Naive thymus-derived CD4-positive, alpha-beta T cell (primary cell): ENCODE measurements at regions of chr2 and their contacts with region 1.

Region 1: DNA sequence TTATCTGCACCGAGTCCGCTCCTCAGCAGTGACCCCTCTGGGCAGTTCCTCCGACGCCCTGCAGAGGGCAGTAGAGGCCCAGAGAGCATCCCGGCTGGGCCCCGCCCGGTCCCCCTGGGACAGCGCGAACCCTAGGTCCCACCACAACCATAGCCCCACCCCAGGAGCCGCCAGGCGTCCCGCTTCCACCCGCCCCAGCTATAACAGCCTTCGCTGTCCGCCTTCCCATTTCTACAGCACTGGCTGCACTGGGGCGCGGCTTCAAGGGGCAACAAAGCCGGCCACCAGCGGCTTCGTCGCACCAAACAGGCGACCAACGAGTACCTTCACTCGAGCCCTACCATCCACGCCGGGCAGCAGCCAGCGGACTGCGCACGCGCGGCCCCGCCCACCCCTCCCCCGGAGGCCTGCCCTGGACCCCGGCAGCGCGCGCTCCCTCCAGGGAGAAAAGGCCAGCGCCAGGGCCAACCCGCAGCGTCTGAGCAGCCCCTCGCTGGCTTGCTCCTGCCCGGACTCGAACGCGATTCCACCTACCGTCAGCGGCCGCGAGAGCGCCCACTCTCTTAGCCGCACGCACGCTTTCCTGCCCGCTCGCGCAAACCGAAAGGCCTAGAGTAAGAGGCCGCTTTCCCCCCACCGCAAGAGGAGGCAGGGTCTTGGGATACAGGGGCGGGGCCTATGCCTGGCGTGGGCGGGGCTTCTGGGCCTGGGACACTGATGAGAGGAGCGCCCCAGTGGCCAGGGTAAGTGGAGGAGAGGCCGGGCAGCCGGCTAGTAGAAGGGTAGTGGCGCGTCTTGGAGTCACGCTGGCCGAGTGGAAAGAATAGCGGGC is at the start of gene NHEJ1:
- DNase-seq: peak; percentile 84 to 98 (median 92)
- ATAC-seq: peak; percentile 96
- H3K4me3 ChIP-seq: peak within 1 kb of the TSS; percentile 70
- H3K4me3 Mint-ChIP-seq: peak within 1 kb of the TSS; percentile 88 to 97 (median 93)
- H3K27ac ChIP-seq: peak within 1 kb of the TSS; percentile 77
- H3K27ac Mint-ChIP-seq: peak within 1 kb of the TSS; percentile 81 to 97 (median 93)
- H3K4me1 ChIP-seq: peaks cover 11 to 12% of the 10 kb centered on the region in 2 donors
- H3K4me1 Mint-ChIP-seq: peaks cover 13 to 41% (median 24%) of the 10 kb centered on the region in 7 donors
- H3K27me3 ChIP-seq: no peaks in the 10 kb centered on the region
- H3K27me3 Mint-ChIP-seq: no peaks in the 10 kb centered on the region
- total RNA-seq, gene NHEJ1: 11.4 to 24.0 (median 17.9) TPM

Region 2: DNA sequence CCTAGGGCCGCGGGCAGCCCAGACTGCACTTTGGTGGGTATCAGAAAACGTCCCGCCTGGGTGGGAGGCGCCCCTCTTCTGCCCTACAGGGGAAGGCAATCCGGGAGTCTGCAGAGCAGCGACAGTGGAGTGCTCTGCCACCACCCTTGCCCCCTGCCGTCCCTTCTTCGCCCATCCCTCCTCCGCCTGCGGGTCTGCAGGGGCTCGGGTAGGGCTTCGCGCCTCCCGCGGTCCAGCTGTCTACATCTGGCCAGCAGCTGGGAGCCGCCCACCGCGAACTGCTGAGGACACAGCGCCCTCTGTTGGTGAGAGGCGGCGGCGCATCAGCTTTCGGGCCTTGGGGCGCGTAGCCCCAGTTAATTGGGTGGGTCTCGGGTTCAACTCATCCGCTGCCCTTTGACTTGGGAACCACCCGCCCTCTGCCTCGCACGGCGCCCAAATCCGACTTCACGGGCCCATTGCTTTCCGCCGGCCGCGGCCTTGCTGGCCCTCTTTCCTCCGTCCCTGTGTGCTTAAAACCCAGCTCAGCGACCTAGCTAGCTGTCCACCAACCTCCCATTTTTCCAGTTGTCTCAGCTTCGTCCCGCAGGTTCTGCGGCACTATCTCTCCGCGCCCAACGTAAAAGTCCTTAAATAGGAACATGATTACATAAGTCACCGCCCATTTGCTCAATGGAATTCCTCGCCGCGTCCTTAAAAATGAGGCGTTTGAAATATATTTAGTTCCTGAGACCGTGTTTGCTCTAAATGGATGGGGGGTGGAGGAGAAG is 262.1 kb before region 1 on chr2:
- CTCF ChIA-PET with region 1: no interaction called
- POLR2A ChIA-PET with region 1: no interaction called
- intact Hi-C with region 1: loop called (anchors 5 kb)
- DNase-seq: peak; percentile 50 to 88 (median 72)
- ATAC-seq: peak; percentile 42
- H3K4me3 ChIP-seq: peak overlapping the region; percentile 65
- H3K4me3 Mint-ChIP-seq: peak overlapping the region; percentile 53 to 87 (median 82)
- H3K27ac ChIP-seq: no peak overlapping the region
- H3K27ac Mint-ChIP-seq: peak overlapping the region in 7 of 9 donors; percentile 33 to 92 (median 71)
- H3K4me1 ChIP-seq: peaks cover 40 to 49% of the 10 kb centered on the region in 2 donors
- H3K4me1 Mint-ChIP-seq: peaks cover 38 to 48% (median 42%) of the 10 kb centered on the region in 7 donors
- H3K27me3 ChIP-seq: peaks cover 0 to 3% of the 10 kb centered on the region in 2 donors
- H3K27me3 Mint-ChIP-seq: peaks cover 20 to 75% (median 40%) of the 10 kb centered on the region in 5 donors

Region 3: DNA sequence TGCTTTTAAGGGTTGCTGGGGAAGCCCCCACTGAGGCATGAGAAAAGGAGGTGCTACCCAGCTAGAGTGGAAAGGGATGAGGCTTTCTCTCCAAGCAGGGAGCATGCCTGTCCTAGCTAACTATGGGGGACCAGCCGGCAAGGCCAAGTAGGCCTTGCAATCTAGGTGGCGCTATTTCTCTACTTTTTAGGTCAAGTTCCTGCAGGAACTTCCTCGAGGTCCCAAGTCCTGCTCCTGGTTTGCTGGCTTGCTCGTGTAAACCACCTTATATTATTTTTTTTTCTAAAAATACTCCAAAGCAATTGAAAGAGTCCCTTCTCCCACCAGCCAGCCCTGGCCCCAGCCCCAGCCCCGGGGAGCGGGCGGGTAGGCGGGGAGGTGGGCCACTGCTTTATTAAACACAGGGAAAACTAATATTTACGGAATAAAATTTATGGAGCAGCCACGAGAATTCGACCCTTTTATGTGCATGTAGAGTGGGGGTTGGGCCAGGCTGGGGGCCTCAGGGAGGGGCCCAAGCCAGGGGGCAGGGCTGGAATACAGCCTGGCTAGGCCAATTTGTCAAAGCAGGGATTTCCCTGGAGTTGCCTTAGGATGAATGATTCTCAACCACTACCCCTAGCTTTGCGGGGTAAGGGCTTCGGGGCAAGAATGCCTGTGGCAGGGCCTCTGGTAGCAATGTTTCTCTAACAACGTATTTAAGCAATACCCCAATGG is 86.8 kb before region 1 on chr2:
- CTCF ChIA-PET with region 1: no interaction called
- POLR2A ChIA-PET with region 1: no interaction called
- intact Hi-C with region 1: no loop called
- DNase-seq: no peak
- ATAC-seq: no peak
- H3K4me3 ChIP-seq: no peak overlapping the region
- H3K4me3 Mint-ChIP-seq: no peak overlapping the region
- H3K27ac ChIP-seq: no peak overlapping the region
- H3K27ac Mint-ChIP-seq: peak overlapping the region in 1 of 9 donors; percentile 22
- H3K4me1 ChIP-seq: no peaks in the 10 kb centered on the region
- H3K4me1 Mint-ChIP-seq: peaks cover 0 to 2% (median 0%) of the 10 kb centered on the region in 7 donors
- H3K27me3 ChIP-seq: no peaks in the 10 kb centered on the region
- H3K27me3 Mint-ChIP-seq: no peaks in the 10 kb centered on the region

Region 4: DNA sequence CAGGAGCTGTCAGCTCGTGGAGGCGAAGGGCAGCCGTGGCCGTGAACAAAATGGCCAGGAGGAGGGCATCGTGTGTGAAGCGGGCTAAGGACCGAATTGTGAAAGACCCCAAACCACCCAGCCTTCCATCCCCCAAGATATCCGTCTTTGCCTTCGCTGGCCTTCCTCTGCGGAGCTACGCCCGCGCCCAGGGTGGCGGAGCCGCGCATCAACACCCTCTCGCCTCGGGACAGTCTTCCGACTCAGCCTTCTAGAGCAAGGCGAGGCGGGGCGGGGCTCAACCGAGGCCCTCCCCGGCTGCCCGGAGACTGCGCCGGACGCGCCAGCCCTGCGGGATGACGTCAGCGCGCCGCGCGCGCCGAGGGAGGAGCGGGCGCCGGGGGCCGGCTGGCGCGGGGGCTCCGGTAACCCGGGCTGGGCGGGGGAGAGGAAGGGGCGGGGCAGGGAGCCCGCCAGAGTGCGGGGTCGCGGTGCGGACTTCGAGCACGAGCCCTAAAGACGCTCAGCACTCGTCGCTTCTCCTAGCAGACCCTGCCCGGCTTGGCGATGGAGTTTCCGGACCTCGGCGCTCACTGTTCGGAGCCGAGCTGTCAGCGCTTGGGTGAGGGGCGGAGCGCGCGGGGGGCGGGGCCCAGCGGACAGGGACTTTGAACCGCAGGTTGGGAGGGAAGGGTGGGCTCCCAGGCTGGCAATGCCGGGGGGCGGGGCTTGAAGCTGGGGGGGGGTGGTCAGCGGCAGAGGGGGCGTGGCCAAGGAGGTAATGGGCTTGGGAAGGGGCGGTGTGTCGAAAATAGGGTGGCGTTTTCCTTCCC is 46.2 kb after region 1 on chr2 and contains the start of gene ZFAND2B:
- CTCF ChIA-PET with region 1: interaction called, 54 read pairs
- POLR2A ChIA-PET with region 1: interaction called, 19 read pairs
- intact Hi-C with region 1: loop called (anchors 1 kb)
- DNase-seq: peak; percentile 92 to 98 (median 96)
- ATAC-seq: peak; percentile 96
- H3K4me3 ChIP-seq: peak within 1 kb of the TSS; percentile 98
- H3K4me3 Mint-ChIP-seq: peak within 1 kb of the TSS; percentile 77 to 98 (median 94)
- H3K27ac ChIP-seq: peak within 1 kb of the TSS; percentile 92
- H3K27ac Mint-ChIP-seq: peak within 1 kb of the TSS; percentile 96 to 99 (median 97)
- H3K4me1 ChIP-seq: peaks cover 20 to 28% of the 10 kb centered on the region in 2 donors
- H3K4me1 Mint-ChIP-seq: peaks cover 15 to 48% (median 43%) of the 10 kb centered on the region in 7 donors
- H3K27me3 ChIP-seq: no peaks in the 10 kb centered on the region
- H3K27me3 Mint-ChIP-seq: no peaks in the 10 kb centered on the region
- total RNA-seq, gene ZFAND2B: 50.1 to 79.5 (median 71.3) TPM

Region 5: GRCh38 chr2:219245148-219245898 is 84.9 kb after region 1 on chr2 and contains the starts of genes GLB1L and STK16:
- CTCF ChIA-PET with region 1: no interaction called
- POLR2A ChIA-PET with region 1: interaction called, 11 read pairs
- intact Hi-C with region 1: loop called in 1 of 2 experiments (anchors 1 kb)
- DNase-seq: peak; percentile 76 to 95 (median 85)
- ATAC-seq: peak; percentile 80
- H3K4me3 ChIP-seq: peak within 1 kb of the TSS; percentile 92
- H3K4me3 Mint-ChIP-seq: peak within 1 kb of the TSS; percentile 82 to 100 (median 93)
- H3K27ac ChIP-seq: peak within 1 kb of the TSS; percentile 89
- H3K27ac Mint-ChIP-seq: peak within 1 kb of the TSS; percentile 88 to 99 (median 97)
- H3K4me1 ChIP-seq: peaks cover 52 to 53% of the 10 kb centered on the region in 2 donors
- H3K4me1 Mint-ChIP-seq: peaks cover 26 to 73% (median 59%) of the 10 kb centered on the region in 7 donors
- H3K27me3 ChIP-seq: no peaks in the 10 kb centered on the region
- H3K27me3 Mint-ChIP-seq: peaks cover 0 to 2% (median 0%) of the 10 kb centered on the region in 5 donors
- total RNA-seq, gene GLB1L: 1.9 to 4.5 (median 2.7) TPM
- total RNA-seq, gene STK16: 17.4 to 35.0 (median 21.8) TPM

Region 6: DNA sequence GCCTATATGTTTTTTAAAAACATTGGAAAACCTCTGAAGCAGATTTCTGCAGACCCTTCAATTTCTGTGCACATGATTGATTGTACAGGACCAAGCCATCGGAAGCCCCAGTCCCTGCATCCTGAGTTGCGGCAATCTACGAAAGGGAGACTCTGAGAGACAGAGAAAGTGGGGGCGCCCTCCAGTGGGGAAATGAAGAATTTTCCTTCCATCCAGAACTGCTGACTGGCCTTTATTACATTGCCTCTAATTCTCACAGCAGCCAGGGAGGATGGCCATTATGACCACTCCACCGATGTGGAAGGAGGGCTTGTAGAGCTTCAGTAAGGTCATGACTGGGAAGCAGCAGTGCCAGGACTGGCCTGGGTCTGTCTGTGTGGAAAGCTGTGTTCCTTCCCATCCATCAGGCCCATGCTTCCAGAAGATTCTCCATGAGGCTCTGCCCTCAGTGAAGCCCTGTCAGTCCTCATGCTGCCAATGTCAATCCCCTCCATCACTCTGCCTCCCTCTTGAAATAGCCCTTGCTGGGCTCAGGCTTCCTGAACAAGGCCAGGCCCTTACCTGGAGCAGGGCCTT is 192.1 kb after region 1 on chr2:
- CTCF ChIA-PET with region 1: no interaction called
- POLR2A ChIA-PET with region 1: no interaction called
- intact Hi-C with region 1: loop called (anchors 1 kb)
- DNase-seq: peak; percentile 25 to 66 (median 58)
- ATAC-seq: peak; percentile 87
- H3K4me3 ChIP-seq: no peak overlapping the region
- H3K4me3 Mint-ChIP-seq: no peak overlapping the region
- H3K27ac ChIP-seq: no peak overlapping the region
- H3K27ac Mint-ChIP-seq: no peak overlapping the region
- H3K4me1 ChIP-seq: no peaks in the 10 kb centered on the region
- H3K4me1 Mint-ChIP-seq: no peaks in the 10 kb centered on the region
- H3K27me3 ChIP-seq: no peaks in the 10 kb centered on the region
- H3K27me3 Mint-ChIP-seq: peaks cover 43 to 64% (median 48%) of the 10 kb centered on the region in 5 donors